OCI-LY7 (cell line): ENCODE measurements at regions of chr7 and their contacts with region 1.

Region 1: DNA sequence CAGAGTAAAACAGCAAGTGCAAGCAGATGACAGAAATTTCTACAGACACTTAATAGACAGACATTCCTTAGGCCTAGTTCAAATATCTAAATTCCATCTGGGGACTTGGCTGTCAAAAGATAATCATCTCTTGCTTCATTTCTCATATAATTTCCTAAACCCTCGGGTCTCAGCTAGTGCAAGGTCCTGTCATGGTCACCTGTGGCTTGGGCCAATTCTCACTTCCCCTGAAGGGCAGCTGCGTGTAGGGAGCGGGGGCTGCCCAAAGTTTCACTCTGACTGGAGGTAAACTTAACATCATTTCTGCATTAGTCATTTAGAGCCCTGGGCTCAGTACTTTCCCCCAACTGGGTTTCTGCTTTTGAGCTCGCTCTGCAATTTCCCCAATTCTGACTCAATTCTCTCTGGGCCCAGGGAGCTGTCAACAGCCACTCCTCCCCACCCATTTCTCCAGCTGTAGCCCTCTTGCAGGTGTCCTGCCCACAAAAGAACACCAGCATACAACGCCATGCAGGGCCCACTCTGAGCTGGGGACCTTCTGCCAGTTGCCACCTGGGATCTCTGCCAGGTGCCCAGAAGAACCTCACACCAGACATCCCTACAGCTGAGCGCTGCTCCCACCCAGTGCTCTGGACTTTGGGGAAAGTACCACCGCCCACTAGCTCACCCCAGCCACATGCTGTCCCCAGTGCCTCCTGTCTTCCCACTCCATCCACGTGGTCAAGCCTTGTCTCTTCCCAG is 38.0 kb downstream of the VOPP1 start:
- DNase-seq: peak; percentile 96
- H3K4me3 ChIP-seq: peak overlapping the region; percentile 58
- H3K27ac ChIP-seq: peak overlapping the region; percentile 100
- H3K4me1 ChIP-seq: peaks cover 96% of the 10 kb centered on the region
- CTCF ChIP-seq: no peak

Region 2: DNA sequence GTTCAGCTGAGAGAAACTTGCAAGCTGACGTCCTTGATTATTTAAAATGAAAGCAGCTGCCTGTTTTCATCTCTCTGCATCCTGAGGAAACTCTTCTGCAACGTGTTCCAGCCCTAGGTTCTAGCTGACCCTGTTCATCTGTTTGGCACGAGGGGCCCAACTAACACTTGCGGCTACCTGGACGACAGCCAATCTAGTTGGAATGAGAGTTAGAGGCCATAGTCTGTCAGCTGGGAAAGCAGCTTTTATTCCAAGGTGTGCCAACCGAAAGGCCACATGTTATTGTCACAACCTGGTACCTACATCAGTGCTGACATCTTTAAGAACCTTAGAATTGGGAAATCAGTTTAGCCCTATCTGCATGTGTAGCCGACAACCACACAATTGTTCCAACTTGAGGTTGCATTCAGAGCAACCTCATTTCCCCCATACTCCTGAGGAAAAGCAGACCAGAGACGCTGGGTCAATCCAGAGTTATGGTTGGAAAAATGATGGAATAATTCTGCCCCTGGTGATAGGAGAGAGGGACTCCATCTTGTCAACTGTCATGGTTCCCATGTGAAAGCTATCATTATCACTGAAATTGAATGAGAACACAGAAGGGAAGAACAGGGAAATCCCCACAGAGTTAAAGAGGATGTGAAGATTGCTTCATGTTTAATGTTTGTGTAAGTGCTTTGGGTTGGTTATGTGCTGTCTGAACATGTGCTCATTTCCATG is 394.0 kb before region 1 on chr7:
- CTCF ChIA-PET with region 1: no interaction called
- POLR2A ChIA-PET with region 1: no interaction called
- intact Hi-C with region 1: no loop called
- DNase-seq: no peak
- H3K4me3 ChIP-seq: no peak overlapping the region
- H3K27ac ChIP-seq: no peak overlapping the region
- H3K4me1 ChIP-seq: no peaks in the 10 kb centered on the region
- CTCF ChIP-seq: no peak

Region 3: GRCh38 chr7:55250313-55250712 is 284.0 kb before region 1 on chr7:
- CTCF ChIA-PET with region 1: no interaction called
- POLR2A ChIA-PET with region 1: no interaction called
- intact Hi-C with region 1: no loop called
- DNase-seq: no peak
- H3K4me3 ChIP-seq: no peak overlapping the region
- H3K27ac ChIP-seq: no peak overlapping the region
- H3K4me1 ChIP-seq: peaks cover 4% of the 10 kb centered on the region
- CTCF ChIP-seq: peak; percentile 69

Region 4: DNA sequence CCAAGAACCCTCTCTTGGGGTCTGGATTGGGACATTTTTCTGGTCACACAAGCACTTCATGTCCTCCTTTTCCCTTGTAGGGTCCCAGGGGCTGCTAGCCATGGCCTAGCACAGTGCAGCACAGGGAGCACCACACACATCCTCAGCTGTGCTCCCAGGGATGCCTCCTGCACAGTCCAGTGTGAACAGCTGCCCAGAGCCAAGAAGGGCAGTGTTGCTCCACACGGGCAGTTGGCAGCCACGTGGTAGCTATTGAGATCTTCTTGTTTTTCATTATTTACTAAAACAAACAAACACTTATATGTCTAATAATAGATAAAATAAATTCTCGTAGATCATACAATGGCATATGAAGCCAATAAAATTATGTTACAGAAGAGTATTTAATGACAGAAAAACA is 183.1 kb before region 1 on chr7:
- CTCF ChIA-PET with region 1: no interaction called
- POLR2A ChIA-PET with region 1: no interaction called
- intact Hi-C with region 1: no loop called
- DNase-seq: no peak
- H3K4me3 ChIP-seq: no peak overlapping the region
- H3K27ac ChIP-seq: no peak overlapping the region
- H3K4me1 ChIP-seq: no peaks in the 10 kb centered on the region
- CTCF ChIP-seq: no peak

Region 5: DNA sequence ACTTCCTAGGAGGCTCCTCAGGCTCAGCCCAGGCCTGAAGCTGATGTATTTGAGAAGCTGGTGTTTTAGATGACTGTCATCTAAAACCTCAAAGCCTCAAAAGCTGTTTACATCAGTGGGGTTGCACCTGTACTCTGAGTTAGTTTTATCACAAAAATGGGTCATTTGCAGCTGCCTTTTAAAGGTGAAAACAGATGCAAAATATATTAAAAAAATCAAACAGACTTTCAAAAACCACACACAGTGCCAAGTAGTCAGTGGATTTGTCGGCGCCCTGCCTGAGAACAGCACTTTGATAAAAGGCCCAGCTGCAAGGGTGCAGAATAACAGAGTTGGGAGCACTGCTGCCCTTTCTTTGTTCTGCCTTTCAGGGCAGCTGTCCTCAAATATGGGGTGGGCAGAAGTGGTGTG is 65.1 kb before region 1 on chr7:
- CTCF ChIA-PET with region 1: no interaction called
- POLR2A ChIA-PET with region 1: interaction called, 5 read pairs
- intact Hi-C with region 1: loop called (anchors 1 kb)
- DNase-seq: peak; percentile 75
- H3K4me3 ChIP-seq: no peak overlapping the region
- H3K27ac ChIP-seq: peak overlapping the region; percentile 91
- H3K4me1 ChIP-seq: peaks cover 31% of the 10 kb centered on the region
- CTCF ChIP-seq: no peak

Region 6: GRCh38 chr7:55552320-55553023 is 18.1 kb after region 1 on chr7:
- CTCF ChIA-PET with region 1: interaction called, 8 read pairs
- POLR2A ChIA-PET with region 1: interaction called, 15 read pairs
- intact Hi-C with region 1: loop called (anchors 1 kb)
- DNase-seq: no peak
- H3K4me3 ChIP-seq: no peak overlapping the region
- H3K27ac ChIP-seq: no peak overlapping the region
- H3K4me1 ChIP-seq: peaks cover 80% of the 10 kb centered on the region
- CTCF ChIP-seq: no peak

Region 7: GRCh38 chr7:55572378-55573233 is 38.3 kb after region 1 on chr7 and contains the start of gene VOPP1:
- CTCF ChIA-PET with region 1: interaction called, 6 read pairs
- POLR2A ChIA-PET with region 1: interaction called, 5 read pairs
- intact Hi-C with region 1: loop called (anchors 1 kb)
- DNase-seq: peak; percentile 87
- H3K4me3 ChIP-seq: peak within 1 kb of the TSS; percentile 95
- H3K27ac ChIP-seq: peak within 1 kb of the TSS; percentile 60
- H3K4me1 ChIP-seq: peaks cover 48% of the 10 kb centered on the region
- CTCF ChIP-seq: no peak
- total RNA-seq, gene VOPP1: 66.9 and 68.8 TPM in 2 replicates

Region 8: DNA sequence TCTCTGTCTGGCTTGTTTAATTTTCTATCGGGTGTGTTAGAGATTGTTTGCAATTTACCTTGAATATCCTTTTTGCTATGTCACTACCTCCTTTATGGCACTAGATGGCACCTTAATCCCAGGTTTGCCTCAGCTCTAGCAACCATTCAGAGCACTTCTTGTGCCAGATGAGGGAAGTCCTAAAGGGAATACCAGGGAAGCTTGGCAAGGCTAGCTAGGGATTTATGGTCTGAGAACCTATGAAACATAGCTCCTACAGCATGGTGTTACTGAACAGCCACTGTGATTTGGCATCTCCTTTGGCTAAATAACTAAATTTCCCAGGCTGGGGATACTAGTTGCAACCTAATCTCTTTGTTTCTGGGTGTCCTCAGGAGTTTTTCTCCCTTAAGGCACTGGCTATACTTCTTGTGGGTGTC is 106.9 kb after region 1 on chr7:
- CTCF ChIA-PET with region 1: no interaction called
- POLR2A ChIA-PET with region 1: no interaction called
- intact Hi-C with region 1: no loop called
- DNase-seq: peak; percentile 74
- H3K4me3 ChIP-seq: no peak overlapping the region
- H3K27ac ChIP-seq: no peak overlapping the region
- H3K4me1 ChIP-seq: peaks cover 12% of the 10 kb centered on the region
- CTCF ChIP-seq: peak; percentile 96